Activated CD4-positive, alpha-beta memory T cell treated with anti-CD3 and anti-CD28 coated beads, Interleukin-2, amount 10 ng/mL, durations not matched to agents 7 days and 5 days (primary cell): ENCODE measurements at regions of chr11 and their contacts with region 1.

Region 1: GRCh38 chr11:1309498-1310317 is at the start of gene TOLLIP:
- DNase-seq: peak; percentile 97
- H3K4me3 Mint-ChIP-seq: peak within 1 kb of the TSS; percentile 77
- H3K27ac Mint-ChIP-seq: peak within 1 kb of the TSS; percentile 77
- H3K4me1 Mint-ChIP-seq: peaks cover 31% of the 10 kb centered on the region
- H3K27me3 Mint-ChIP-seq: peaks cover 24% of the 10 kb centered on the region
- total RNA-seq, gene TOLLIP: 33.9 to 36.8 TPM

Region 2: GRCh38 chr11:1171985-1172728 is 137.6 kb before region 1 on chr11:
- CTCF ChIA-PET with region 1: no interaction called
- POLR2A ChIA-PET with region 1: no interaction called
- DNase-seq: no peak
- H3K4me3 Mint-ChIP-seq: no peak overlapping the region
- H3K27ac Mint-ChIP-seq: no peak overlapping the region
- H3K4me1 Mint-ChIP-seq: no peaks in the 10 kb centered on the region
- H3K27me3 Mint-ChIP-seq: no peaks in the 10 kb centered on the region

Region 3: DNA sequence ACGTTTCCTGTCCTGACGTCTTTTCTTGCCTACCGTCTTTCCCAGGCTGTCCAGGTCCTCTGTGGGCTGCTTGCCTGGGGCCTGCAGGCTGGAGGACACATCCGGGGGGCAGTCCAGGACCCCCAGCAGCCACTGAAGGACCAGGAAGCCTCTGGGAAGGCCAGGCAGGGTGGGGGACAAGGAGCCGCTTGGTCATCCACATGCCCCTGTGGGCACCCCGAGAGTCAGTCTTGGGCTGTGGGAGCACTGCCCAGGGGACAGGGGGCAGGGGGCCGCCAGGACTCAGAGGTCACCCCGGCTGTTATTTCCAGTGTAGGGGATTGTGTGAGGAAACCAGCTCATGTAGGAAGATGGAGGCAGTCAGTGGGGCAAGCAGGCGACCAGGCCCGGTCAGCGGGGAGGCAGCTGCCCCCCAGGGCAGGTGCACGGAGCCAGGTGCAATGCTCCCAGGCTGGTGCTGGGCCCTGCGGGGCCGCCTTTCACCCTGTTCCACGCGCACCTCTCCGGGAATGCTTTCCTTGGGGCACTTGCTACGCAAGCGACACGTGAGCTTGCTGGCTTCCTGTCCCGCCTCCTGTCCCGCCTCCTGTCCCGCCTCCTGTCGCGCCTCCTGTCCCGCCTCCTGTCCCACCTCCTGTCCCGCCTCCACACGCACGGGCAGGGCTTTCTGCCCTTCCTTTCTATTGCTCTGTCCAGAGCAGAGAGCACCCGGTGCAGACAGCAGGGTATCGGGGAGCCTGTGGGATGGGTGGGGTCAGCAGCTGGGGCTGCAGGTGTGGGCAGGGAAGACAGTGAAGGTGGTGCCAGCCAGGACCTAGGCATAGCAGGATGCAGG is 47.3 kb before region 1 on chr11:
- CTCF ChIA-PET with region 1: no interaction called
- POLR2A ChIA-PET with region 1: interaction called, 16 read pairs
- DNase-seq: peak; percentile 88
- H3K4me3 Mint-ChIP-seq: peak overlapping the region; percentile 72
- H3K27ac Mint-ChIP-seq: peak overlapping the region; percentile 77
- H3K4me1 Mint-ChIP-seq: peaks cover 15% of the 10 kb centered on the region
- H3K27me3 Mint-ChIP-seq: no peaks in the 10 kb centered on the region

Region 4: DNA sequence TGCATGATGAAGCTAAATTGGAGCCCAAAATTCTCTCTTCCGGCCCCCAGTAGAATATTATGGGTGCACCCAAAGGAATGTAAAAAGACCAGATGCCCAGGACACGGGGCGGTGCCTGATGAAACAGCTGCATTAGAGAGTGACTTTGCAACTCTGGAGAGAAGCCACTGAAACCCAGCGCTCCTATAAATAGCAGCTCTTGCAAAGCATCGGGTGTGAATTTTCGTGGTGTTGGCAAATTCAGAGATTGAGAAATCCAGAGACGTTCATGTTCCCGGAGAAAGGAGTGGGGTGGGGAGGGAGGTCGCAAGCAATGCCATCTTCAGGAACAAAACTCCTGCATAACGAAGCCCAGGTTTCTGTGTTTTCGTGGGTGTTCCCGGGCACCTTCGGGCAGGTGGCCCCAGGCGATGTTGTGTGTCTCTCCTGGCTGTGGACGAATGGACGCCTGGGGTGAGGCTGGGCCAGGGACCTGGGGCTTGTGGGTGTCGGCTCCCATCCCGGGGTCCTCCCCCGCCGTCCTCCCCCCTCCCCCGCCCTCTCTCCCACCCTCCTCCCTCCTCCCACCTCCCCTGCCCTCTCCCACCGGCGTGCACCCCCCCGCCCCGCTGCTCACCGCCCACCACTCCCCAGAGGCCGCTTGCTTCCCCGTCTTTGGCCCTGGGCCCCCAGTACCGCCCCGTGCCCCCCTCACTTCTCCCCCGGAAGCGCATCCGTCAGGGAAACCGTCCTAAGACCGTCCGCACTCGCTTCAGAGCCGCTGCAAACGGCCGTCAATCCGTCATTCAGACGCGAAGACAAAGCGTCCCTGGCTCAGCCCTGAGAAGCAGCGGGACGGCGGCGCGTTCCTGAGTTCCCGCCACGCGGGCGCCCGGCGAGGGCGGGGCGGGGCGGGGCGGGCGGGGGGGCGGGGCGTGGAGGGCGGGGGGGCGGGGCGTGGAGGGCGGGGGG is 26.4 kb after region 1 on chr11:
- CTCF ChIA-PET with region 1: no interaction called
- POLR2A ChIA-PET with region 1: interaction called, 18 read pairs
- DNase-seq: peak; percentile 61
- H3K4me3 Mint-ChIP-seq: peak overlapping the region; percentile 70
- H3K27ac Mint-ChIP-seq: no peak overlapping the region
- H3K4me1 Mint-ChIP-seq: peaks cover 17% of the 10 kb centered on the region
- H3K27me3 Mint-ChIP-seq: peaks cover 16% of the 10 kb centered on the region